Kidney (tissue), 22 donors: ENCODE measurements at regions of chr4 and their contacts with region 1.

Region 1: GRCh38 chr4:71009890-71010588 is 16.6 kb downstream of the DCK start:
- DNase-seq: peak in 2 of 5 donors; percentile 47 to 64
- H3K4me3 ChIP-seq: no peak overlapping the region
- H3K27ac ChIP-seq: no peak overlapping the region
- H3K4me1 ChIP-seq: no peaks in the 10 kb centered on the region
- H3K27me3 ChIP-seq: no peaks in the 10 kb centered on the region
- CTCF ChIP-seq: peak; percentile 55

Region 2: DNA sequence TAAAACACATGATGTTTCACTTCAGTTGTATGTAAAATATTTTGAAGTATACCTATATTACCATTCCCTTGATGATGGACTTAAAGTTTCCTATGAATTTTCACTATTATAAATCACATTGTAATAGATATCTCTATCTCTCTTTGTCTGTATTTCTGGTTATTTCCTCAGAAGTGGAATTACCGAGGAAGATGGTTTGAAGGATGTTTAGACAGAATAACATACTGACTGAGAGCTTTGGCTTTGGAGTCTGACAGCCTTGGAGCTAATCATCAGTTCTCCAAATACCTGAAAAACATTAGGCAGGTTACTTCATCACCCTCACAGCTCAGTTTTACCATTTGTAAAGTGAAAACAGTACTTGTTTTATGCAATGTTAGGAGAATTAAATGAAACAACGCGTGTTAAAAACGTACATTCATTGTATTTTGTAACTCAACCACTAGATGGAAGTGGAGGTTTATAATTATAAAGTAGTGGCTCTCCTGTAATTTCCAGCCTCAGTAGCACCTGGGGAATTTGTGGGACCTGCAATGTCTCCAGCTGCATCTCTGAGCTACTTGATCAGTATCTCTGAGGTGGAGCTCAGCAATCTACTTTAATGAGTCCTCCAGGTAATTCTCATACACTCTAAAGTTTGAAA is 358.1 kb before region 1 on chr4:
- intact Hi-C with region 1: loop called (anchors 10 kb)
- DNase-seq: peak in 3 of 5 donors; percentile 10 to 51 (median 34)
- H3K4me3 ChIP-seq: no peak overlapping the region
- H3K27ac ChIP-seq: no peak overlapping the region
- H3K4me1 ChIP-seq: no peaks in the 10 kb centered on the region
- H3K27me3 ChIP-seq: no peaks in the 10 kb centered on the region
- CTCF ChIP-seq: peak; percentile 52

Region 3: GRCh38 chr4:70958681-70959080 is 51.4 kb before region 1 on chr4:
- intact Hi-C with region 1: no loop called
- DNase-seq: no peak
- H3K4me3 ChIP-seq: no peak overlapping the region
- H3K27ac ChIP-seq: no peak overlapping the region
- H3K4me1 ChIP-seq: no peaks in the 10 kb centered on the region
- H3K27me3 ChIP-seq: no peaks in the 10 kb centered on the region
- CTCF ChIP-seq: no peak

Region 4: GRCh38 chr4:71290074-71290473 is 280.0 kb after region 1 on chr4:
- intact Hi-C with region 1: no loop called
- DNase-seq: peak in 2 of 5 donors; percentile 27 to 29
- H3K4me3 ChIP-seq: no peak overlapping the region
- H3K27ac ChIP-seq: peak overlapping the region; percentile 54 to 56
- H3K4me1 ChIP-seq: peaks cover 0 to 9% (median 0%) of the 10 kb centered on the region in 3 donors
- H3K27me3 ChIP-seq: no peaks in the 10 kb centered on the region
- CTCF ChIP-seq: no peak